Activated B cell treated with CpG ODN at 0.5 μM for 24 hours (primary cell): ENCODE measurements at regions of chr19 and their contacts with region 1.

Region 1: GRCh38 chr19:48872182-48872883 is at the start of gene PPP1R15A:
- DNase-seq: peak; percentile 99
- ATAC-seq: peak; percentile 35
- H3K4me3 Mint-ChIP-seq: peak within 1 kb of the TSS; percentile 100
- H3K27ac Mint-ChIP-seq: peak within 1 kb of the TSS; percentile 100
- H3K4me1 Mint-ChIP-seq: peaks cover 42% of the 10 kb centered on the region
- H3K27me3 Mint-ChIP-seq: no peaks in the 10 kb centered on the region
- CTCF ChIP-seq: no peak
- total RNA-seq, gene PPP1R15A: 115 and 123 TPM in 2 replicates

Region 2: DNA sequence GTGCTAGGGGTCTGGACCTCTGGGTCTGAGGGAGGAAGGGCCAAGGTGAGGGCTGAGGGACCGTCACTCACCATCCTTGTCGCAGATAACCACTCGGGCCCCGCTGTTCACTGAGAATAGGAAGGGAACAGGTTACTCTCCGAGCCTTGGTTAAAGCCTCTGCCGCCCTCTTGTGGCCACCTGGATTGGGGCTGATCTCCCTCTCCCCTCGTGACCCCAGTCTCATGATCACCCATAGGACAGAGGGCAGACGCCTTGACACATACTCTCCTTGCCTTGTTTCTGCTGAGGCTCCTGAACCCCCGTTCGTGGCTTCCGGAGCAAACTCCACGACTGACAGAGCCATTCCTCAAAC is 36.6 kb before region 1 on chr19:
- CTCF ChIA-PET with region 1: interaction called, 5 read pairs
- POLR2A ChIA-PET with region 1: interaction called, 10 read pairs
- intact Hi-C with region 1: no loop called
- DNase-seq: peak; percentile 89
- ATAC-seq: peak; percentile 86
- H3K4me3 Mint-ChIP-seq: peak overlapping the region; percentile 88
- H3K27ac Mint-ChIP-seq: peak overlapping the region; percentile 75
- H3K4me1 Mint-ChIP-seq: peaks cover 26% of the 10 kb centered on the region
- H3K27me3 Mint-ChIP-seq: no peaks in the 10 kb centered on the region
- CTCF ChIP-seq: no peak

Region 3: DNA sequence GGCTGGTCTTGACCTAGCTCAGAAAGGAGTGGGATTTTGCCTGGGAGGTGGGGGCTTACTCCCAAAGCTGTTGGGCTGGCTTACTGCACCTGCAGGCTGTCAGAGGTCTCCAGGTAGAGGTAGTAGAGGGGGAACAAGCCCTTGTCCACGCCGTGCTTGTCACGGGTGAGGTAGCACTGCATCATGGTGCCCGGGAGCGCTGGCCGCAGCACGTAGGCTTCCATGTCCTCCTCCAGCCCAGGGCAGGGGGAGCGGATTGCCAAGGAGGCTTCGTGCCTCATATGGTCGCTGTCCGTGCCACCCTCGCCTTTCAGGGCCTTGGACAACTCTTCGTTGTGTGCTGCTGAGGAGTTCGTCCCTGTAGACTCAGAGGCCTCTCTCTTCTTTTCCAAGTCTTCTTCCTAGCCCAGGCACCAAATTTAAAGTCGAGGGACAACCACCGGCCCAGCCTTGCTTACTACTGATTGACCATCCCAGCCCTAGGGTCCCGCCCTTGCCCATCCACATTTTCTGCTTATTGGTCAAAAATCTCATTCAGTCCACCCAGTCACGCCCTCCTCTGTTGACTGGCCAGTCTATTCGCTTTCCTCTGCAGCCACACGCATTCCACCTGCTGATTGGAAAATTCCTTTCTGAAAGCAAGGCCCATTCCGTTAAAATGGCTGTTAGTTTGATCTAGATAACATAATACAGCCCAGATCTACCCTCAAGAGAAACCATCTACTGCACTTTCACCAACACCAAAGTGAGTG is 15.7 kb after region 1 on chr19:
- CTCF ChIA-PET with region 1: no interaction called
- POLR2A ChIA-PET with region 1: interaction called, 27 read pairs
- intact Hi-C with region 1: no loop called
- DNase-seq: no peak
- ATAC-seq: no peak
- H3K4me3 Mint-ChIP-seq: no peak overlapping the region
- H3K27ac Mint-ChIP-seq: no peak overlapping the region
- H3K4me1 Mint-ChIP-seq: peaks cover 11% of the 10 kb centered on the region
- H3K27me3 Mint-ChIP-seq: no peaks in the 10 kb centered on the region
- CTCF ChIP-seq: no peak

Region 4: DNA sequence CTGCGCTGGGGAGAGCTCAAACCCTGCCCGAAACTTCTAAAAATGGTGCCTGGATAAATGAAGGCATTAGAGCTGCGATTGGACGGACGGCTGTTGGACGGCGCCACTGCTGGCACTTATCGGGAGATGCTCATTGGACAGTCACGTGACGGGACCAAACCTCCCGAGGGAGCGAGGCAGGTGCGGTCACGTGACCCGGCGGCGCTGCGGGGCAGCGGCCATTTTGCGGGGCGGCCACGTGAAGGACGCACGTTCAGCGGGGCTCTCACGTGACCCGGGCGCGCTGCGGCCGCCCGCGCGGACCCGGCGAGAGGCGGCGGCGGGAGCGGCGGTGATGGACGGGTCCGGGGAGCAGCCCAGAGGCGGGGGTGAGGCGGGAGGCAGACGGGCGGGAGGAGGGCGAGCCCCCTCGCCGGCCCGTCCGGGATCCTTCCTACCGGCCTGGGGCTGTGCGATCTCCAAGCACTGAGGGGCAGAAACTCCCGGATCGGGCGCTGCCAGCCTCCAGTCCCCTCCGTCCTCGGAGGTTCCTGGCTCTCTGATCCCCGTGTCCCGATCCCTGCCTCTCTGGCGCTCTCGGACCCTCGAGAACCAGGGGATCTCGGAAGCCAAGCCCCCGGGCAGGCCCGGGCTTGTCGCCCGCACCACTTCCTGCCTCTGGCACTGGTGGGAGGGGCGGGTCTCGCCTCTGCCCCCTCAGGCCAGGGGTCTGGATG is 82.4 kb after region 1 on chr19 and contains the start of gene BAX:
- CTCF ChIA-PET with region 1: no interaction called
- POLR2A ChIA-PET with region 1: interaction called, 53 read pairs
- intact Hi-C with region 1: no loop called
- DNase-seq: peak; percentile 93
- ATAC-seq: peak; percentile 89
- H3K4me3 Mint-ChIP-seq: peak within 1 kb of the TSS; percentile 91
- H3K27ac Mint-ChIP-seq: peak within 1 kb of the TSS; percentile 87
- H3K4me1 Mint-ChIP-seq: peaks cover 26% of the 10 kb centered on the region
- H3K27me3 Mint-ChIP-seq: no peaks in the 10 kb centered on the region
- CTCF ChIP-seq: no peak
- total RNA-seq, gene BAX: 111 and 129 TPM in 2 replicates

Region 5: GRCh38 chr19:48975947-48976847 is 103.9 kb after region 1 on chr19:
- CTCF ChIA-PET with region 1: interaction called, 9 read pairs
- POLR2A ChIA-PET with region 1: interaction called, 179 read pairs
- intact Hi-C with region 1: no loop called
- DNase-seq: no peak
- ATAC-seq: peak; percentile 64
- H3K4me3 Mint-ChIP-seq: no peak overlapping the region
- H3K27ac Mint-ChIP-seq: no peak overlapping the region
- H3K4me1 Mint-ChIP-seq: peaks cover 8% of the 10 kb centered on the region
- H3K27me3 Mint-ChIP-seq: no peaks in the 10 kb centered on the region
- CTCF ChIP-seq: no peak